H1 (cell line): ENCODE measurements at regions of chr11 and their contacts with region 1.

Region 1: GRCh38 chr11:65366340-65366773 is 11.8 kb downstream of the TIGD3 start:
- DNase-seq: no peak
- H3K4me3 ChIP-seq: no peak overlapping the region
- H3K27ac ChIP-seq: no peak overlapping the region
- H3K4me1 ChIP-seq: peaks cover 0 to 4% (median 0%) of the 10 kb centered on the region in 4 experiments; a peak in 2 of 7 replicates
- H3K27me3 ChIP-seq: no peaks in the 10 kb centered on the region
- CTCF ChIP-seq: peak in 2 of 3 experiments; percentile 71 to 77; a peak in 3 of 4 replicates
- EP300 ChIP-seq: no peak
- POLR2A ChIP-seq: no peak
- RAD21 ChIP-seq: peak; percentile 87 to 92

Region 2: GRCh38 chr11:65382033-65382807 is 15.9 kb after region 1 on chr11 and contains the start of gene SLC25A45:
- CTCF ChIA-PET with region 1: interaction called, 25 read pairs
- POLR2A ChIA-PET with region 1: interaction called, 3 read pairs
- DNase-seq: peak in 1 of 2 experiments; percentile 80
- H3K4me3 ChIP-seq: peak within 1 kb of the TSS in 1 of 4 experiments; percentile 8; a peak in 2 of 8 replicates
- H3K27ac ChIP-seq: no peak within 1 kb of the TSS; the same call in 1 of the 2 replicates
- H3K4me1 ChIP-seq: peaks cover 0 to 12% (median 11%) of the 10 kb centered on the region in 4 experiments; a peak in 5 of 7 replicates
- H3K27me3 ChIP-seq: 0 out of 7 replicates have a peak, but pooled peaks cover 0 to 2% (median 0%) of the 10 kb centered on the region in 4 experiments
- CTCF ChIP-seq: peak; percentile 23 to 50 (median 46)
- EP300 ChIP-seq: no peak
- POLR2A ChIP-seq: 0 out of 3 replicates have a peak, but pooled peaks of 1 of the 2 experiments have one; percentile 19
- RAD21 ChIP-seq: peak; percentile 49 to 55
- total RNA-seq, gene SLC25A45: 0.54 and 0.61 TPM in 2 replicates